BJ (cell line): ENCODE measurements at regions of chr19 and their contacts with region 1.

Region 1: DNA sequence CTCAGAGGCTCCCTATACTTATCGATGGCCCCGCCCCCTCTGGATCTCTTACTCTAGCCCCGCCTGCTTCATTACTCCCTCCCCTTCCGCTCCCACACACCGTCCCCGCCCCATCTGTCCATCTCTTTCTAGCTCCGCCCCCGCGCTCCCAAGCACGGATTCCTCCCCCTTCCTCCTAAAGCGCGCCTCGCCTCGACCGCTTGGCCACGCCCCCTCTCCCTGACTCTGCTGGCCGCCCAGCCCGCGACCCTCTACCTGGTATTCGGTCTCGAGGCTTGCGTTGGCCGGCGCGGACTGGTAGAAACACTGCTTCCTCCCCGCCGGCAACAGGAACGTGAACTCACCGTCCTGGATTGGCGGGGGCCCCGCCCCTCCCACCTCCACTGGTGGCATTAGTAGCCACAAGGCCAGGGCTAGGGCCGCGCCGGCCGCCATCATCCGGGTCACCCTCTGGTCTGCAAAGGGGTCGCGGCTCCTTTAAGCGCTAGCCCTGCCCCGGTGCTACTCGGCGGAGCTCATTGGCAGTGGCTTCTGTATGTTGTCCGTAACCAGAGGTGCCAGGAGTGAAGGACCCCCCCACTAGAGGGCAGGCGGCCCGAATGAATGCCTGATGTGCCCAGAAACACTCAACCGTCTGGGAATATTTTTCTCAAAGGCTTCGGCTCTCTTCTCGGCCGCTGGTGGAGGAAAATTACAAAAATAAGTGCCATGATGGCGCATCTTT is at the start of gene TMED1:
- DNase-seq: peak; percentile 94
- H3K4me3 ChIP-seq: peak within 1 kb of the TSS; percentile 66
- H3K27me3 ChIP-seq: no peaks in the 10 kb centered on the region
- CTCF ChIP-seq: peak; percentile 17; the same call in 1 of the 2 replicates
- polyA plus RNA-seq, gene TMED1: 50.2 and 85.3 TPM in 2 replicates

Region 2: DNA sequence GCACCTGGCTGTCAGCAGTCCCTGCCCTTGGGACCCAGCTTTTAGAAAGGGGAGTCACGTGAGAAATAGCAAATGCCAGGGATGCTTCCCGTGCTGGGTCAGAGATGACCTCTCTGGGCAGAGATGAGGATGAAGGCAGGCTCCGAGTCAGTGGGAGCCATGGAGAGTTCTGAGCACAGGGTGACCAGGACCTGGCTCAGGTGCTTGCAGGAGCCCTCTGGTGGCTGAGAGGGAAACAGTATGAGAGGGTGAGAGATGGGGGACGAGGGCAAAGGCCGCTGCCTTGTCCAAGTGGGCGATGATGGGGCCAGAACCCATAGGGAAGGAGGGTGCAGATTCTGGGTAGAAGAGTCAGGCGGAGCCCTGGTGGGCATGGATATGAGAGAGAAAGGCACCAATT is 15.7 kb before region 1 on chr19:
- CTCF ChIA-PET with region 1: interaction called, 11 read pairs
- POLR2A ChIA-PET with region 1: interaction called, 3 read pairs
- DNase-seq: no peak
- H3K4me3 ChIP-seq: no peak overlapping the region
- H3K27me3 ChIP-seq: no peaks in the 10 kb centered on the region
- CTCF ChIP-seq: peak; percentile 22; the same call in 1 of the 2 replicates

Region 3: DNA sequence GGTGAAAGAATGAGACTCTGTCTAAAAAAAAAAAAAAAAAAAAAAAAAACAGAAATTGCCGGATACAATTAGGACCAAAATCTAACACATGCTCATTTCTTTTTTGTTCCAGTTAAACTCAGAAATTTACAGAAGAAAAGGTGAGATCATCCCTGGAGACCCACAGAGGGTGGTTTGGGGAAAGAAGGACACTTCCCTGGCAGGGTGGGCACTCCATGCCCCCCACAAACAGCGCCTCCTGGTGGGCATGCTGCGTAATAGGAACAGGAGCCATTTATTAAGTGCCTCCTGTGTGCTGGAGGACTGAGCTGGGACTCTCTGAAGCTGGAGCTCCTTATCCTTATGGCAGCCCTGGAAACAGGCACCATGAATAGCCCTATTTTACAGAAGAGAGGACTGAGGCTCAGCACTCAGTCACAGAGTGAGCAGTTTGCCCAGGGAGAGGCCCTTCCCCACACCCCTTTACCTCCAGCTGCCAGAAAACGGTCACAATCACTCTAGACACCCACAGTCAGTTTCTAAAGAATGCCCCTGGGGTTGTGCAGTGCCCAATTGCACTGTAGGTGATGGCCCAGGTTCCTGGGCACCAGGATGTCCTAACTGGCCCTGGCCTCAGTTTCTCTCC is 22.4 kb after region 1 on chr19:
- CTCF ChIA-PET with region 1: interaction called, 26 read pairs
- POLR2A ChIA-PET with region 1: interaction called, 5 read pairs
- DNase-seq: no peak
- H3K4me3 ChIP-seq: no peak overlapping the region
- H3K27me3 ChIP-seq: no peaks in the 10 kb centered on the region
- CTCF ChIP-seq: peak; percentile 82

Region 4: DNA sequence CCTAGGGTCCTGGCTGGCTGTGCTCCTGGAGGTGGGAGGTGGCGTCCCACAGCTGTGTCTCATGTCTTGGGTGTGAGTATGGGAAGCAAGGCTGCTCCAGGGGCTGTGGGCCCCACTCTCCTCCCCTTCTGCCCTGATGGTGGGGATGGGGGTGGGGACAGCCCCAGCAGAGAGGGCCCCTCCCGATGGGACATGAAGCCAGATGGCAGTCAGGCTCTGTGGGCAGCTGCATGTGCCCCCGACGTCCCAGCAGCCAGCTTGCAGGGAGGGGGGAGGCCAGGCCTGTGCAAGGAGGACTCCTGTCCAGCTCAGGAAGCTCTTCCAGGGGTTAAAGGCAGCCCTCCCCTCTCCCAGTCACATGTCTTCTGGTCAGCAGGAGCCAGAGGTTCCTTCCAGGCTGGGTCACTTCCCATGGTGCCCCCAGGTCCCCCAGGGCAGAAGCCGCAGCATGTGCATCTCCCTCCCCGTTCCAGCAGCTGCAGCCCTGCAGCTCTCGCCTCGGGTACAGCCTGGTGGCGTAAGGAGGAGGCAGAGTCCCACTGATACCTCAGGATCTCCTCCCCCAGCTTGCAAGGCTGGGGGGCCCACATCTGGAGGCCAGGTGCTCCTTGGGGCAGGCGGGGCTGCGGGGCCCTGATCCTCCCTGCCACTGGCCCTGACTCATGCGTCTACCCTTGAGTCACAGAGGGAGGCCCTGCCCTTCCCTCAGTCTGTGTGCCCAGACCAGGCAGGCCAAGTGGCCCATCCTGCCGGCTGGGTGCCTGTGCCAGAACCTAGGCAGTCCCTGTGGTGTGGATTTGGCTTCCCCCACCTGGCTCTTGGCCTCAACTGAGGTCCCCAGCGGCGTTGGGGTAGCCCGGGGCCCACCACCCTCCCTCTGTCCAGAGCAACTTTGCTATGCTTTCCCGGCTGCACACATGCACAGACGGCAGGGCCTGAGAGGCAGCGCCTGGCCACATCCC is 79.5 kb after region 1 on chr19:
- CTCF ChIA-PET with region 1: no interaction called
- POLR2A ChIA-PET with region 1: no interaction called
- DNase-seq: peak; percentile 78
- H3K4me3 ChIP-seq: no peak overlapping the region
- H3K27me3 ChIP-seq: no peaks in the 10 kb centered on the region
- CTCF ChIP-seq: peak; percentile 72